CD4-positive, alpha-beta T cell (primary cell): ENCODE measurements at regions of chr12 and their contacts with region 1.

Region 1: DNA sequence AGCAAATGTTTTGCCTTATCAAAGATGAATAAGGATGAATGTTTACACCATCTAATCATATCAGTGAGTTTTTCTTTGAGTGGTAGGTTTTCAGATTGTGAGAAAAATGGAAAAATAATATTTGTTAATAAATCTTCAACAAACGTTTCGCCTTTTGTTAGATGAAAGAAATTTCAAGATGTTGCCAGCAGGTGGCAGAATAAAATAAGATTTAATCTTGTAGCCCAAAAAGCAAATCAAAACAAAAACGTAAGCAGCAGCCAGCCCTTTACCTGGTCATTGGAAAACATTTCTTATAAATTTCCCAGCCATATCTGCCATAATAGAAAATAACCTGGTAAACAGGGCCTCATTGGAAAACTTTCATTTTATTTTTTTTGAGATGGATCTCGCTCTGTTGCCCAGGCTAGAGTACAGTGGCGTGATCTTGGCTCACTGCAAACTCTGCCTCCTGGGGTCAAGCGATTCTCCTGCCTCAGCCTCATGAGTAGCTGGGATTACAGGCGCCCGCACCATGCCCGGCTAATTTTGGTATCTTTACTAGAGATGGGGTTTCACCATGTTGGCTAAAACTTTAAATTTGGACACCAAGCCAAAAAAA is 15.4 kb upstream of the TMEM120B start:
- DNase-seq: peak in 4 of 14 experiments; percentile 55 to 79 (median 78)
- ATAC-seq: peak; percentile 32
- H3K4me3 ChIP-seq: no peak overlapping the region
- H3K4me3 Mint-ChIP-seq: no peak overlapping the region
- H3K27ac ChIP-seq: no peak overlapping the region
- H3K27ac Mint-ChIP-seq: no peak overlapping the region
- H3K4me1 ChIP-seq: peaks cover 2% of the 10 kb centered on the region
- H3K4me1 Mint-ChIP-seq: peaks cover 4% of the 10 kb centered on the region
- H3K27me3 ChIP-seq: no peaks in the 10 kb centered on the region
- H3K27me3 Mint-ChIP-seq: no peaks in the 10 kb centered on the region
- CTCF ChIP-seq: peak; percentile 81

Region 2: GRCh38 chr12:120528861-120529525 is 1168.2 kb before region 1 on chr12 and contains the start of gene COQ5:
- CTCF ChIA-PET with region 1: no interaction called
- POLR2A ChIA-PET with region 1: no interaction called
- intact Hi-C with region 1: no loop called
- DNase-seq: peak; percentile 70 to 89 (median 79)
- ATAC-seq: peak; percentile 97
- H3K4me3 ChIP-seq: peak within 1 kb of the TSS; percentile 92
- H3K4me3 Mint-ChIP-seq: peak within 1 kb of the TSS; percentile 100
- H3K27ac ChIP-seq: peak within 1 kb of the TSS; percentile 69 to 73
- H3K27ac Mint-ChIP-seq: peak within 1 kb of the TSS; percentile 95
- H3K4me1 ChIP-seq: peaks cover 27% of the 10 kb centered on the region
- H3K4me1 Mint-ChIP-seq: peaks cover 32% of the 10 kb centered on the region
- H3K27me3 ChIP-seq: no peaks in the 10 kb centered on the region
- H3K27me3 Mint-ChIP-seq: no peaks in the 10 kb centered on the region
- CTCF ChIP-seq: no peak
- total RNA-seq, gene COQ5: 6.9 to 7.1 TPM

Region 3: DNA sequence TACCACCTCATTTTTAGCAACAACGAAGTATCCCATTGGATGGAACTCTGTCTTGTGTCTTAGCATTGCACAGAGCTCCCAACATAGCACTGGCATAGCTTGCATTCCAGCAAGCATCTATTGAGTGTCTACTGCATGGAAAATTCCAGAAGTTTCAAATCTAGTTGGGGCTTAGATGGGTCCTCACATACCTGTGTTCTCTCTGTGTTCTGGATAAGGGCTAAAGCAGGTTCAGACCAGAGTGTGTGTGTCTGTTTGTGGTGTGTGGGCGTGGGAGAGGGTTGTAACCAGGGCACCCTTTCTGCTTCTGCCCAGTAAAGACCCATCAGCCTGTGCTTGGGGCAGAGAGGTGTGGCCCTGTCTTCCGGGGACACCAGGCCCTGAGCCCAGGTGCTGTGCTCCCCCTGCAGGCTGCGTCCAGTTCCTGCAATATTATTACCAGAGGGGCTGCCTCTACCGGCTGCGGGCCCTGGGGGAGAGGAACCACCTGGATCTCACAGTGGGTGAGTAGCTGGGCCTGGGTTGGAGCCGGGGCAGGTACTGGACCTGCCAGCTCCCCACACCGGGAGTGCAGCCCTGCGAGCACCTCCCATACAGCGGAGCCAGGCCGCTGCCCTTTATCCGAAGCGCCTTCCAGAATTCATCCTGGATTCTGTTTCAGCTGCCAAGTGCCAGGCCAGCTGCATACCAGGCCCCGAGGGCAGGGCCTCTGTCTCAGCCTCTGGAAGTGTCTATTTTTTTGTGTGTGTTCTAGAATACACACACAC is 76.0 kb after region 1 on chr12:
- CTCF ChIA-PET with region 1: interaction called, 6 read pairs
- POLR2A ChIA-PET with region 1: no interaction called
- intact Hi-C with region 1: loop called (anchors 1 kb)
- DNase-seq: peak; percentile 67 to 89 (median 76)
- ATAC-seq: peak; percentile 84
- H3K4me3 ChIP-seq: no peak overlapping the region
- H3K4me3 Mint-ChIP-seq: no peak overlapping the region
- H3K27ac ChIP-seq: no peak overlapping the region
- H3K27ac Mint-ChIP-seq: no peak overlapping the region
- H3K4me1 ChIP-seq: peaks cover 26% of the 10 kb centered on the region
- H3K4me1 Mint-ChIP-seq: peaks cover 13% of the 10 kb centered on the region
- H3K27me3 ChIP-seq: no peaks in the 10 kb centered on the region
- H3K27me3 Mint-ChIP-seq: no peaks in the 10 kb centered on the region
- CTCF ChIP-seq: peak; percentile 91